HAP-1 (cell line): ENCODE measurements at regions of chr14 and their contacts with region 1.

Region 1: GRCh38 chr14:71138448-71139293 is 231.4 kb downstream of the PCNX1 start:
- DNase-seq: peak; percentile 41 to 74
- H3K4me3 ChIP-seq: no peak overlapping the region
- H3K4me1 ChIP-seq: peaks cover 5% of the 10 kb centered on the region; the same call in 1 of the 2 replicates
- H3K27me3 ChIP-seq: no peaks in the 10 kb centered on the region

Region 2: GRCh38 chr14:71060825-71061455 is 77.7 kb before region 1 on chr14:
- in situ Hi-C with region 1: no loop called
- DNase-seq: no peak
- H3K4me3 ChIP-seq: no peak overlapping the region
- H3K4me1 ChIP-seq: no peaks in the 10 kb centered on the region
- H3K27me3 ChIP-seq: no peaks in the 10 kb centered on the region

Region 3: GRCh38 chr14:71753126-71753830 is 614.6 kb after region 1 on chr14:
- in situ Hi-C with region 1: loop called (anchors 5 kb)
- DNase-seq: peak; percentile 89 to 93
- H3K4me3 ChIP-seq: no peak overlapping the region
- H3K4me1 ChIP-seq: peaks cover 7% of the 10 kb centered on the region; the same call in 1 of the 2 replicates
- H3K27me3 ChIP-seq: no peaks in the 10 kb centered on the region

Region 4: GRCh38 chr14:71855399-71856036 is 716.8 kb after region 1 on chr14:
- in situ Hi-C with region 1: loop called (anchors 10 kb)
- DNase-seq: peak; percentile 41 to 91
- H3K4me3 ChIP-seq: no peak overlapping the region
- H3K4me1 ChIP-seq: no peaks in the 10 kb centered on the region
- H3K27me3 ChIP-seq: no peaks in the 10 kb centered on the region